Cardiac septum (tissue), 1 donor: ENCODE measurements at regions of chr9 and their contacts with region 1.

Region 1: DNA sequence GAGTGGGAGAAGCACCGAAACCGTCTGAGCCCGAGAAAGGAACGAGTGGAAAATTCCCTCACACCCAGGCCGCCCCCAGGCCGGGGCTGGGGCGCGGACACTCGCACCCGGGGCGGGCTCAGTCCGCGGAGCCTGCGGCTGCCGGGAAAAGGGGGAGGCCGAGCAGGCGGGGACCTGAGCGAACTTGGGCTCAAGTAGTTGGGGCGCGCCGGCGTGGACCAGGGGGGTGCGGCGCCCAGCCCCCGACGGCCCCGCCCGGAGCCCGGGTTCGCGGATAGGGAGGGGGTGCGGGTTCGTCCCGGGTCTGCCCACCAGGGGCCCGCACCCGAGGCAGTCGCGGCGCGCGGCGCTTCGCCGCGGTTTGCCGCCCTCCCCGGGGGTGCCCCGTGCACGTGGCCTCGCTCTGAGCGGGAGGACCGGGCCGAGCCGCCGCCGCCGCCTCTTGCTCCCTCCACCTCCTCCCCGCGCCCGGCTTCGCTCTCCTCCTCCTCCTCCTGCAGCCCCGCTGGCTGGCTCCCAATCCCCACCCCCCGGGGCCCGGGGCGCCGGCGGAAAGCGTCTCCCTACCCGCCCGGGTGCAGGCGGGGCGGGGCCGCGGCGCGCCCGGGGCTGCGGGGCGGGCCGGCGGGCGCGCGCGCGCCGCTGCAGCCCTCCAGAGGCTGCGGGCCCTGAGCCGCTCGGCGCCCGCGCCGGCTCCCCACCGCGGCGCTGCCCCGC is 1.1 kb upstream of the NFIB start:
- DNase-seq: peak; percentile 95

Region 2: GRCh38 chr9:13841746-13842462 is 473.2 kb before region 1 on chr9:
- intact Hi-C with region 1: loop called (anchors 5 kb)
- DNase-seq: no peak

Region 3: DNA sequence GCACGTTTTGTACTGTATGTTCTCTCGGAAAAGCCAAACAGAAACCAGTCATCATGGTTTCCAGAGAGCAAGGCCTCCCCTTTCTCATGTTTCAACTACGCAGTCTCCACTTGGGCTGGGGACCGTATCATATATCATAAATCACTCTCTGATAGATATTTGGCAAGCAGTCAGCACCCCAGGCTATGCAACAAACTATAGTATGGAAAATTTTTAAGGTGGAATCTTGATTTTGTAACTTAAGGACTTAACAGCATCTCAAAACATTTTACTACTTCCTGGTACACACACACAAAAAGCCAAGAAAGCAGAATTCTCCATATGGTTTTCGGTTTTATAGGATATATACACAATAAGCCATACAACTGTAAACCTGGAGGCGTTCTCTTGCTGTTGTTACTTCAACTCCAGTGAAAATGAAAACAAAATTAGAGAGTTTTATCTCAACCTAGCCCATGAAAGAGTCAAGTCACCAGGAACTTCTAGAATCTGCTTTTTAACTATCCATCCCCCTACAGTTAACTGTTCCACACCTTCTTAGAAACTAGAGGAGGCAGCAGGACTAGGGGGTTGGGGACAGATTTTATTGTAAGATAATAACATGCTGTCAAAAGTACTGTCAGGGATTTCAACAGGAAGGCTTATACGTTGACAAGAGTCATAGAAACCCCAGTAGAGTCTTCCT is 284.6 kb before region 1 on chr9:
- intact Hi-C with region 1: loop called (anchors 2 kb)
- DNase-seq: no peak

Region 4: GRCh38 chr9:14198841-14199455 is 116.1 kb before region 1 on chr9:
- intact Hi-C with region 1: loop called (anchors 5 kb)
- DNase-seq: peak; percentile 89

Region 5: DNA sequence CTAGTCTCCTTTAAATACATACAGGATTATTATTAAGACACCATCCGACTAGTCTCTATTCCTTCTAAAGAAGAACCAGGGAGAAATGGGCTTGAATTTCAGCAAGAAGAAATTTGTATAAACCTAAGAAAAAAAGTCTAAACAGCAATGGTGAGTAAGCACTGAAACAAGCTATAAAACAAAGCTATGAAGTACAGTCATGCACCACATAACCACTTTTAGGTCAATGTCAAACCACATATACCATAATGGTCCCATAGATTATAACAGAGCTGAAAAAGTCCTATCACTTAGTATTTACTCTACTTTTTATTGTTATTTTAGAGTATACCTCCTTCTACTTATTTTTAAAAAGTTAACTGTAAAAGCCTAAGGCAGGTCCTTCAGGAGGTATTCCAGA is 100.9 kb after region 1 on chr9:
- intact Hi-C with region 1: no loop called
- DNase-seq: no peak